ENCODE measurements at regions of chr7 and their contacts with region 1.

Region 1: GRCh38 chr7:30148951-30149471 is 14.2 kb downstream of the MTURN start:
- DNase-seq: peak; percentile 72
- ATAC-seq: peak; percentile 80
- H3K4me3 ChIP-seq: peak overlapping the region in 4 of 5 experiments; percentile 11 to 48 (median 26)
- H3K4me3 Mint-ChIP-seq: no peak overlapping the region
- H3K27ac ChIP-seq: peak overlapping the region in 1 of 2 donors; percentile 44
- H3K27ac Mint-ChIP-seq: no peak overlapping the region
- H3K4me1 ChIP-seq: peaks cover 6 to 14% of the 10 kb centered on the region in 2 donors
- H3K4me1 Mint-ChIP-seq: peaks cover 4% of the 10 kb centered on the region
- H3K27me3 ChIP-seq: no peaks in the 10 kb centered on the region
- H3K27me3 Mint-ChIP-seq: no peaks in the 10 kb centered on the region
- CTCF ChIP-seq: no peak

Region 2: GRCh38 chr7:30178748-30179436 is 29.9 kb after region 1 on chr7:
- CTCF ChIA-PET with region 1: no interaction called
- POLR2A ChIA-PET with region 1: no interaction called
- intact Hi-C with region 1: loop called (anchors 1 kb)
- DNase-seq: peak; percentile 72
- ATAC-seq: peak; percentile 90
- H3K4me3 ChIP-seq: peak overlapping the region in 3 of 5 experiments; percentile 9 to 37 (median 36)
- H3K4me3 Mint-ChIP-seq: peak overlapping the region; percentile 81
- H3K27ac ChIP-seq: peak overlapping the region; percentile 64 to 70
- H3K27ac Mint-ChIP-seq: peak overlapping the region; percentile 92
- H3K4me1 ChIP-seq: peaks cover 28 to 37% of the 10 kb centered on the region in 2 donors
- H3K4me1 Mint-ChIP-seq: peaks cover 44% of the 10 kb centered on the region
- H3K27me3 ChIP-seq: no peaks in the 10 kb centered on the region
- H3K27me3 Mint-ChIP-seq: no peaks in the 10 kb centered on the region
- CTCF ChIP-seq: no peak

Region 3: DNA sequence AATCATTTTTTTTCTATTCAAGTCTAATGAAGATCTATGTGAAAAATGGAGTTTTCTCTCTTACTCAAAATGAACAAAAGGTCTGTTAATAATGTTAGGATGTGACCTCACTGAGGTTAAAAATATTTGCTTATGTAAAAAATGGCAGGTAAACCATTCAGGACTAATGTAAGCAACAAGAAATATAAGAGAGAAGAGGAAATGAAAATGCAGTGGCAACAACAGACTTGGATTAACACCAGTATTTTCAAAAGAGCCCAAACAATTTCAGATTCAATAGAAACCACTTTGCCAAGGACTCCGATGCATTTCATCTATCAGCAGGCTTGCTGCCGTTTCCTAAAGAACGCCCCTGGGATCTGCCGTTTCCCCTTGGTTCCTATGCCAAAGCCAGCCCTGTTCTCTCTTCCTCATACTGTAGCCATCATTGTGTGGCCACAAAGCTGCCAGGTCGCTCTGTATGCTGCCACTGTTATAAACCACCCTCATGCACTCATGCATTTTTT is 52.2 kb after region 1 on chr7:
- CTCF ChIA-PET with region 1: no interaction called
- POLR2A ChIA-PET with region 1: no interaction called
- intact Hi-C with region 1: no loop called
- DNase-seq: peak; percentile 61
- ATAC-seq: peak; percentile 81
- H3K4me3 ChIP-seq: no peak overlapping the region
- H3K4me3 Mint-ChIP-seq: peak overlapping the region; percentile 49
- H3K27ac ChIP-seq: peak overlapping the region; percentile 25 to 54
- H3K27ac Mint-ChIP-seq: peak overlapping the region; percentile 73
- H3K4me1 ChIP-seq: peaks cover 16 to 20% of the 10 kb centered on the region in 2 donors
- H3K4me1 Mint-ChIP-seq: peaks cover 22% of the 10 kb centered on the region
- H3K27me3 ChIP-seq: no peaks in the 10 kb centered on the region
- H3K27me3 Mint-ChIP-seq: no peaks in the 10 kb centered on the region
- CTCF ChIP-seq: no peak